Activated CD4-positive, alpha-beta T cell treated with anti-CD3 and anti-CD28 coated beads for 36 hours (primary cell): ENCODE measurements at regions of chr5 and their contacts with region 1.

Region 1: GRCh38 chr5:53425598-53426511 is 54.6 kb upstream of the FST start:
- DNase-seq: peak; percentile 56
- ATAC-seq: no peak
- H3K4me3 Mint-ChIP-seq: no peak overlapping the region
- H3K27ac Mint-ChIP-seq: no peak overlapping the region
- H3K4me1 Mint-ChIP-seq: no peaks in the 10 kb centered on the region
- H3K27me3 Mint-ChIP-seq: peaks cover 14% of the 10 kb centered on the region

Region 2: DNA sequence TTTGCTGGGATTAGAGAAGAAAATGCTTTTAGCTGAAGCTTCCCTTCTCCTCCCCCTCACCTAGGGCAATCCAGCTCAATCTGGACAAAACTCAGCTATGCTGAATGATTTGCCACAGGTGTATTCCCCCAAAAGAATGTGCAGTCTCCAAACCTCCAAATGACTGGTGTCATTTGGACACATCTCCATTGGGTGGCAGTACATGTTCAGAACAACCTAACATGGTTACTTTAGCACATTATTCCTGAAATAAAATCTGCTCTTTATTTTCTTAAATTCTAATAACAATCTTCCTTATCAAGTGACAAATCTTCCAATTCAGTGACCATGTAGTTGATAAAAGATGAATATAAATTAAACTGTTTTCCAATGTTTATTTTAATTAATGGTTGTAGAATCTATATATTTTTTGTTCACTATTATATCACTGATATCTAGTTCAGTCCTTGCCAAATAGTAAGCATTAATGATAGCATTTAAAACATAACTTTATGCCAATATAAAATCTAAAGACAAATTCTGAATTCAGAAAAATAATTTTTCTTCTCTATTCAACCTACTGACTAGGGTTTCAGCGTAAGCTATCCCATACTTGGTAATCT is 255.0 kb before region 1 on chr5:
- CTCF ChIA-PET with region 1: interaction called, 3 read pairs
- POLR2A ChIA-PET with region 1: no interaction called
- intact Hi-C with region 1: loop called in 1 of 2 experiments (anchors 2 kb)
- DNase-seq: peak; percentile 16
- ATAC-seq: no peak
- H3K4me3 Mint-ChIP-seq: no peak overlapping the region
- H3K27ac Mint-ChIP-seq: no peak overlapping the region
- H3K4me1 Mint-ChIP-seq: no peaks in the 10 kb centered on the region
- H3K27me3 Mint-ChIP-seq: peaks cover 7% of the 10 kb centered on the region

Region 3: GRCh38 chr5:54062958-54063357 is 637.1 kb after region 1 on chr5:
- CTCF ChIA-PET with region 1: no interaction called
- POLR2A ChIA-PET with region 1: no interaction called
- intact Hi-C with region 1: no loop called
- DNase-seq: no peak
- ATAC-seq: no peak
- H3K4me3 Mint-ChIP-seq: no peak overlapping the region
- H3K27ac Mint-ChIP-seq: no peak overlapping the region
- H3K4me1 Mint-ChIP-seq: no peaks in the 10 kb centered on the region
- H3K27me3 Mint-ChIP-seq: no peaks in the 10 kb centered on the region

Region 4: DNA sequence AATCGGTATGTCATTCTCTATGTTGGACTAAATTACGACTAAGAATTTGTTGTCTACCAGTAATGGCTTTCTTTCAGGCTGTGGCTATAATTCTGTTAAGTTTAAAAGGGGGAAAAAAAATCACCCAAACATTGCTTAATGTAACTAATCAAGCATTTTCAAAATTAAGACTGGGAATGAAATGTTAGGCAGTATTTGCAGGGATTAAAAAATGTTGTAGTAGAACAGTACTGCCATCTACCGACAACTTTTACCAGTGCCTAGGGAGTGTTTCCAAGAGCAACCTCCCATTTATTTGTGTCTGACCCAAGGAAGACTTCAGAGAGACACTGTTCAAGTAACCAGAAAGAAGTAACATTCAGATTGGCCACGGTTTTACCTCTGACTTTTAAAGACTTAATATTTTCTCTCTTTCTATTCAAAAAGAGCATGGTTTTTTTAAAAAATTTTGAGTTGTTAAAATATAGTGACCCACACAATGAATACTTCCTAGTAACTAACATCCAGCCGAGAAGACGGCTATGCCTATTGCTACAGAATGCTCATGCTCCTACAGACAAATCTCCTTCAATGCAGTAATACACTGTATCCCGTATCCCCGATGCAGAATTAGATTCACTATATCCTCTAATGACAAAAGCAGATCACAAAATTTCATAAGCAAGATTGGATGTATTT is 792.1 kb after region 1 on chr5:
- CTCF ChIA-PET with region 1: no interaction called
- POLR2A ChIA-PET with region 1: no interaction called
- intact Hi-C with region 1: loop called (anchors 2 kb)
- DNase-seq: peak; percentile 12
- ATAC-seq: no peak
- H3K4me3 Mint-ChIP-seq: no peak overlapping the region
- H3K27ac Mint-ChIP-seq: no peak overlapping the region
- H3K4me1 Mint-ChIP-seq: peaks cover 7% of the 10 kb centered on the region
- H3K27me3 Mint-ChIP-seq: no peaks in the 10 kb centered on the region

Region 5: GRCh38 chr5:54229041-54229780 is 803.4 kb after region 1 on chr5:
- CTCF ChIA-PET with region 1: interaction called, 3 read pairs
- POLR2A ChIA-PET with region 1: no interaction called
- intact Hi-C with region 1: loop called in 1 of 2 experiments (anchors 1 kb)
- DNase-seq: peak; percentile 86
- ATAC-seq: peak; percentile 90
- H3K4me3 Mint-ChIP-seq: no peak overlapping the region
- H3K27ac Mint-ChIP-seq: no peak overlapping the region
- H3K4me1 Mint-ChIP-seq: peaks cover 6% of the 10 kb centered on the region
- H3K27me3 Mint-ChIP-seq: no peaks in the 10 kb centered on the region

Region 6: DNA sequence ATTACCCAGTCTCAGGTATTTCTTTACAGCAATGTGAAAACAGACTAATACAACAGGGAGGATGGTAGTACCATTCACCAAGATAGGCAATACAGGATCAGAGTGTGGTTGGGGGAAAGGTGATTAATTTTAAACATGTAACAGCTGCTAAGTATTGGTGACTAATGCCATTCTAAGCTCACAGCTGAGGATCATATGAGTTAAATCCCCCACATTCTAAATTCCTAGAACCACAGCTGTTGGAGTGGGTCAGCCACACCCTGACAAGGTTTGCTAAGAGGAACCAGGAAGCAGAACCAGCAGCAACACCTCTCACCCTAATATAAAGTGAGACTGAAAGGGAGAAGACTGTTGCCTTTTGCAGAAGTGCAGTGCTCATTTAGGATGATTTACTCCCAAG is 1054.4 kb after region 1 on chr5:
- CTCF ChIA-PET with region 1: no interaction called
- POLR2A ChIA-PET with region 1: no interaction called
- intact Hi-C with region 1: loop called in 1 of 2 experiments (anchors 5 kb)
- DNase-seq: no peak
- ATAC-seq: no peak
- H3K4me3 Mint-ChIP-seq: no peak overlapping the region
- H3K27ac Mint-ChIP-seq: no peak overlapping the region
- H3K4me1 Mint-ChIP-seq: no peaks in the 10 kb centered on the region
- H3K27me3 Mint-ChIP-seq: peaks cover 8% of the 10 kb centered on the region